ENCODE measurements at regions of chr3 and their contacts with region 1.

Region 1: GRCh38 chr3:30693470-30694120 is 87.2 kb downstream of the TGFBR2 start:
- DNase-seq: peak; percentile 60 to 70 (median 67)
- H3K4me3 ChIP-seq: no peak overlapping the region
- H3K4me3 Mint-ChIP-seq: no peak overlapping the region
- H3K27ac ChIP-seq: no peak overlapping the region
- H3K27ac Mint-ChIP-seq: peak overlapping the region; percentile 17 to 86 (median 47)
- H3K4me1 ChIP-seq: peaks cover 26% of the 10 kb centered on the region
- H3K4me1 Mint-ChIP-seq: peaks cover 34 to 46% (median 38%) of the 10 kb centered on the region in 4 donors
- H3K27me3 ChIP-seq: no peaks in the 10 kb centered on the region
- H3K27me3 Mint-ChIP-seq: no peaks in the 10 kb centered on the region

Region 2: DNA sequence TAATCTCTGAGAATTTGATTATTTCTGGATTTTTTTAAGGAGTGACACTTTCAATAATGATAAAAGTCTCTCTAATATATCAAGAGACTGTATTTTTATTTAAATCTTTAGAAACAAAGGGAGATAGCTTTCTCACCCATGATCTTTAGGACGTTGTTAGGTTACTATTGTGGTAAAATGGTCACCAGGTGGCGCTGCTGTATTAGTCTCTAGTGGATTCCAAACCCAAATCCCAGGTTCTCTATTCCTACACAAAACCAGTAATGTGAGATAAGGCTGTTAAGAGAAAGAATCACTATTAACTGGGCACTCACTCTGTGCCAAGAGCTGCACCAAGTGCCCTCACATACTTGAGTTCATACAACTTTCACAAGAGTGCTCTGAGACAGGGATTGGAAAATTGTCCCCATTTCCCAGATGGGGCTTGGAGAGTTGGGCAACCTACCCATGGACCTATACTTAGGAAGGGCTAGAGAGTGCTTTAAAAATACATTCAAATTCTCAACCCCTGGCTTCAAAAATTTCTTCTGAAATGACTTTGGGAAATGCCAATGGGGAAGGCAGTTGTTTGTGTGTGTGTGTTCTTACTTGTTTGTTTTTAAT is 680.6 kb before region 1 on chr3:
- CTCF ChIA-PET with region 1: interaction called, 17 read pairs
- POLR2A ChIA-PET with region 1: no interaction called
- intact Hi-C with region 1: no loop called
- DNase-seq: peak; percentile 11 to 33 (median 26)
- H3K4me3 ChIP-seq: no peak overlapping the region
- H3K4me3 Mint-ChIP-seq: no peak overlapping the region
- H3K27ac ChIP-seq: no peak overlapping the region
- H3K27ac Mint-ChIP-seq: no peak overlapping the region
- H3K4me1 ChIP-seq: no peaks in the 10 kb centered on the region
- H3K4me1 Mint-ChIP-seq: no peaks in the 10 kb centered on the region
- H3K27me3 ChIP-seq: no peaks in the 10 kb centered on the region
- H3K27me3 Mint-ChIP-seq: peaks cover 0 to 12% of the 10 kb centered on the region in 2 donors

Region 3: GRCh38 chr3:30199096-30199759 is 494.4 kb before region 1 on chr3:
- CTCF ChIA-PET with region 1: interaction called, 58 read pairs
- POLR2A ChIA-PET with region 1: no interaction called
- intact Hi-C with region 1: loop called (anchors 1 kb)
- DNase-seq: peak; percentile 41 to 44 (median 43)
- H3K4me3 ChIP-seq: no peak overlapping the region
- H3K4me3 Mint-ChIP-seq: no peak overlapping the region
- H3K27ac ChIP-seq: no peak overlapping the region
- H3K27ac Mint-ChIP-seq: no peak overlapping the region
- H3K4me1 ChIP-seq: no peaks in the 10 kb centered on the region
- H3K4me1 Mint-ChIP-seq: no peaks in the 10 kb centered on the region
- H3K27me3 ChIP-seq: no peaks in the 10 kb centered on the region
- H3K27me3 Mint-ChIP-seq: no peaks in the 10 kb centered on the region

Region 4: DNA sequence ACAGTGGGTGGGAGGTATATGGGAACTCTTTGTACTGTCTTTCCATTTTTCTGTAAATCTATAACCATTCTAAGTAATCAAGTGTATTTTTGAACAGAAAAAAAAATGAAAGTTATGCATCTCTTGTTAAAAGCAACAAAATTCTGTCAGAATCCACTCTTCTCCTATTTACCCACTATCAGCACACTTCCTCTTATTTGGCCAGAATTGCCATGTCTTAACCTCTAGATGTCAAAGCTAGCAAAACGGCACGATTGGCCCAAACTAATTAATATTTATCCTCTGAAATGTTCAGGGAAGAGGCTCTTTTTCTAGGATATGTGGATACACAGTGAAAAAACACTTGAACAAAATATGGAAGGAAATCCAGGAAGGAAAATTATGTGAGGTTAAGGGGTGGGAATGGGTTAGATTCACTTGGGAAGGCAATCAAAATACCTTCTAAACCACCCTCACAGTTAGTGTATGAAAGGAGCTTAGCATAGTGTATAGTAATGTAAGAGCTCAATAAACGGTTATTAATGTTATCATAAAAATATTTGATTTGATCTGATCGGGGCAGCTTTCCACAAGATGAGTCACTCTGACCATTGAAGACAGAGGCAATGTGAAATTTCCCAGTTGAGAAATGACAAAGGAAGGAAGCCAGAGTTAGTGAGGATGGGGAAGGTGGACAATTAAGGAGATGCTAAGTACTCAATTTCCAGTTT is 107.3 kb before region 1 on chr3:
- CTCF ChIA-PET with region 1: no interaction called
- POLR2A ChIA-PET with region 1: no interaction called
- intact Hi-C with region 1: no loop called
- DNase-seq: no peak
- H3K4me3 ChIP-seq: no peak overlapping the region
- H3K4me3 Mint-ChIP-seq: no peak overlapping the region
- H3K27ac ChIP-seq: no peak overlapping the region
- H3K27ac Mint-ChIP-seq: no peak overlapping the region
- H3K4me1 ChIP-seq: no peaks in the 10 kb centered on the region
- H3K4me1 Mint-ChIP-seq: no peaks in the 10 kb centered on the region
- H3K27me3 ChIP-seq: no peaks in the 10 kb centered on the region
- H3K27me3 Mint-ChIP-seq: no peaks in the 10 kb centered on the region

Region 5: DNA sequence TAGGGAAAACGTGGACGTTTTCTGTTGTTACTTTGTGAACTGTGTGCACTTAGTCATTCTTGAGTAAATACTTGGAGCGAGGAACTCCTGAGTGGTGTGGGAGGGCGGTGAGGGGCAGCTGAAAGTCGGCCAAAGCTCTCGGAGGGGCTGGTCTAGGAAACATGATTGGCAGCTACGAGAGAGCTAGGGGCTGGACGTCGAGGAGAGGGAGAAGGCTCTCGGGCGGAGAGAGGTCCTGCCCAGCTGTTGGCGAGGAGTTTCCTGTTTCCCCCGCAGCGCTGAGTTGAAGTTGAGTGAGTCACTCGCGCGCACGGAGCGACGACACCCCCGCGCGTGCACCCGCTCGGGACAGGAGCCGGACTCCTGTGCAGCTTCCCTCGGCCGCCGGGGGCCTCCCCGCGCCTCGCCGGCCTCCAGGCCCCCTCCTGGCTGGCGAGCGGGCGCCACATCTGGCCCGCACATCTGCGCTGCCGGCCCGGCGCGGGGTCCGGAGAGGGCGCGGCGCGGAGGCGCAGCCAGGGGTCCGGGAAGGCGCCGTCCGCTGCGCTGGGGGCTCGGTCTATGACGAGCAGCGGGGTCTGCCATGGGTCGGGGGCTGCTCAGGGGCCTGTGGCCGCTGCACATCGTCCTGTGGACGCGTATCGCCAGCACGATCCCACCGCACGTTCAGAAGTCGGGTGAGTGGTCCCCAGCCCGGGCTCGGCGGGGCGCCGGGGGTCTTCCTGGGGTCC is 87.1 kb before region 1 on chr3 and contains the start of gene TGFBR2:
- CTCF ChIA-PET with region 1: interaction called, 9 read pairs
- POLR2A ChIA-PET with region 1: interaction called, 8 read pairs
- intact Hi-C with region 1: loop called (anchors 1 kb)
- DNase-seq: peak; percentile 67 to 90 (median 69)
- H3K4me3 ChIP-seq: peak within 1 kb of the TSS; percentile 82 to 89
- H3K4me3 Mint-ChIP-seq: peak within 1 kb of the TSS; percentile 97 to 99 (median 99)
- H3K27ac ChIP-seq: peak within 1 kb of the TSS; percentile 85
- H3K27ac Mint-ChIP-seq: peak within 1 kb of the TSS; percentile 92 to 99 (median 98)
- H3K4me1 ChIP-seq: peaks cover 57% of the 10 kb centered on the region
- H3K4me1 Mint-ChIP-seq: peaks cover 43 to 67% (median 48%) of the 10 kb centered on the region in 4 donors
- H3K27me3 ChIP-seq: no peaks in the 10 kb centered on the region
- H3K27me3 Mint-ChIP-seq: no peaks in the 10 kb centered on the region
- total RNA-seq, gene TGFBR2: 110 TPM

Region 6: GRCh38 chr3:30644593-30645012 is 49.0 kb before region 1 on chr3:
- CTCF ChIA-PET with region 1: interaction called, 12 read pairs
- POLR2A ChIA-PET with region 1: interaction called, 3 read pairs
- intact Hi-C with region 1: no loop called
- DNase-seq: peak; percentile 61 to 87 (median 66)
- H3K4me3 ChIP-seq: peak overlapping the region in 1 of 2 donors; percentile 37
- H3K4me3 Mint-ChIP-seq: peak overlapping the region; percentile 71 to 86 (median 78)
- H3K27ac ChIP-seq: peak overlapping the region; percentile 66
- H3K27ac Mint-ChIP-seq: peak overlapping the region; percentile 88 to 97 (median 93)
- H3K4me1 ChIP-seq: peaks cover 99% of the 10 kb centered on the region
- H3K4me1 Mint-ChIP-seq: peaks cover 77 to 97% (median 87%) of the 10 kb centered on the region in 4 donors
- H3K27me3 ChIP-seq: no peaks in the 10 kb centered on the region
- H3K27me3 Mint-ChIP-seq: no peaks in the 10 kb centered on the region

Region 7: DNA sequence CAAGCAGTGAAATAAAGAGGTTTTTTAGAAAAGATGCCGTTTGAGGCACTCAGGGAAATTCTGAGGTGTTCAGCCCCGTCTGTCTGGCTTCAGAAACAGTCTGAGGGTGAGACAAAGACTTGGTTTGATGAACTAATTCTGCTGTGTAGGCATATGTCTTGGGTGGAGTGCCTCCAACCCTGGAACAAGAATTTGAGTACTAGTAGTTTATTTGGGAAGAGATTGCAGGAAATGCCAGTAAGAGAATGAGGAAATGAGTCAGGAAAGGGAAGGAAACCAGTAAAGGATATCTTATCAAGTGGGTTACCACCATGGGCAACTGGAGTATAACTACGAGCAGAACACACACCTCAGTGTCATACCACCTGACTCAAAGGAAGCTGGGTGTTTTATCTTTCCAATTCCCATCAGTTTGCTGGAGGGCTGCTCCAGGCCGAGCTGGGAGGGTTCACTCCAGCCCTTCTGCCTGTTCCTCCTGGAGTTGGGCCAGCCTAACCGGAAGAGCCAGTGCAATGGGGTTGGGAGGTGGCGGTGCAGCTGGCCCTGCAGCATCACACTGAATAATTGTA is 11.9 kb before region 1 on chr3:
- CTCF ChIA-PET with region 1: interaction called, 10 read pairs
- POLR2A ChIA-PET with region 1: interaction called, 4 read pairs
- intact Hi-C with region 1: no loop called
- DNase-seq: no peak
- H3K4me3 ChIP-seq: no peak overlapping the region
- H3K4me3 Mint-ChIP-seq: peak overlapping the region in 7 of 8 donors; percentile 40 to 74 (median 58)
- H3K27ac ChIP-seq: no peak overlapping the region
- H3K27ac Mint-ChIP-seq: peak overlapping the region; percentile 40 to 89 (median 81)
- H3K4me1 ChIP-seq: peaks cover 87% of the 10 kb centered on the region
- H3K4me1 Mint-ChIP-seq: peaks cover 65 to 97% (median 82%) of the 10 kb centered on the region in 4 donors
- H3K27me3 ChIP-seq: no peaks in the 10 kb centered on the region
- H3K27me3 Mint-ChIP-seq: no peaks in the 10 kb centered on the region

Measured in CD4-positive, alpha-beta memory T cell (primary cell).